Activated CD8-positive, alpha-beta T cell treated with anti-CD3 and anti-CD28 coated beads for 36 hours (primary cell): ENCODE measurements at regions of chr9 and their contacts with region 1.

Region 1: GRCh38 chr9:35553670-35554543 is 51.2 kb upstream of the TESK1 start:
- DNase-seq: peak; percentile 63
- ATAC-seq: peak; percentile 96
- H3K4me3 Mint-ChIP-seq: no peak overlapping the region
- H3K27ac Mint-ChIP-seq: no peak overlapping the region
- H3K4me1 Mint-ChIP-seq: no peaks in the 10 kb centered on the region
- H3K27me3 Mint-ChIP-seq: no peaks in the 10 kb centered on the region
- CTCF ChIP-seq: peak; percentile 80

Region 2: GRCh38 chr9:35116898-35117551 is 436.9 kb before region 1 on chr9:
- CTCF ChIA-PET with region 1: interaction called, 13 read pairs
- POLR2A ChIA-PET with region 1: no interaction called
- intact Hi-C with region 1: loop called (anchors 10 kb)
- DNase-seq: peak; percentile 91
- ATAC-seq: peak; percentile 51
- H3K4me3 Mint-ChIP-seq: peak overlapping the region; percentile 75
- H3K27ac Mint-ChIP-seq: peak overlapping the region; percentile 86
- H3K4me1 Mint-ChIP-seq: peaks cover 35% of the 10 kb centered on the region
- H3K27me3 Mint-ChIP-seq: no peaks in the 10 kb centered on the region
- CTCF ChIP-seq: peak; percentile 83

Region 3: DNA sequence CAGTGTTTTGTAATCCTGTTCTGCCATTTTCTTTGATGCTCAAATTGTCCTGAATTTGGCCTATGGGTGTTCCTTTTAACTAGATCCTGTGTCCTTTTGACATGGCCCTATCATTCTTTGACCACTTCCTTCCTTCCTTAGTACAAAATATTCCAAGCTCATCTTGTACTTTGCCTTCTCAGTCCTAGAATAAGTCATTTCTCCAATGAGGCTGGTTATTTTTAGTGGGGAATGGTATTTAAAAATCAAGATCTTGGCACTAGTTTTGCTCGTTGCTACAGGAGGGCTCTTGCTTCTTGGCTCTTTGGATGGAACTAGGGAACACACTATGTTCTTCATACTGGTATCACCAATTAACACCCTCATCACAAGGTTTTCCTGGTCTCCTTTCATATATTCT is 284.0 kb before region 1 on chr9:
- CTCF ChIA-PET with region 1: no interaction called
- POLR2A ChIA-PET with region 1: no interaction called
- intact Hi-C with region 1: no loop called
- DNase-seq: no peak
- ATAC-seq: no peak
- H3K4me3 Mint-ChIP-seq: no peak overlapping the region
- H3K27ac Mint-ChIP-seq: no peak overlapping the region
- H3K4me1 Mint-ChIP-seq: peaks cover 4% of the 10 kb centered on the region
- H3K27me3 Mint-ChIP-seq: peaks cover 16% of the 10 kb centered on the region
- CTCF ChIP-seq: no peak

Region 4: GRCh38 chr9:35481347-35481975 is 72.4 kb before region 1 on chr9:
- CTCF ChIA-PET with region 1: interaction called, 22 read pairs
- POLR2A ChIA-PET with region 1: interaction called, 3 read pairs
- intact Hi-C with region 1: no loop called
- DNase-seq: peak; percentile 58
- ATAC-seq: peak; percentile 65
- H3K4me3 Mint-ChIP-seq: no peak overlapping the region
- H3K27ac Mint-ChIP-seq: no peak overlapping the region
- H3K4me1 Mint-ChIP-seq: no peaks in the 10 kb centered on the region
- H3K27me3 Mint-ChIP-seq: peaks cover 5% of the 10 kb centered on the region
- CTCF ChIP-seq: peak; percentile 66

Region 5: DNA sequence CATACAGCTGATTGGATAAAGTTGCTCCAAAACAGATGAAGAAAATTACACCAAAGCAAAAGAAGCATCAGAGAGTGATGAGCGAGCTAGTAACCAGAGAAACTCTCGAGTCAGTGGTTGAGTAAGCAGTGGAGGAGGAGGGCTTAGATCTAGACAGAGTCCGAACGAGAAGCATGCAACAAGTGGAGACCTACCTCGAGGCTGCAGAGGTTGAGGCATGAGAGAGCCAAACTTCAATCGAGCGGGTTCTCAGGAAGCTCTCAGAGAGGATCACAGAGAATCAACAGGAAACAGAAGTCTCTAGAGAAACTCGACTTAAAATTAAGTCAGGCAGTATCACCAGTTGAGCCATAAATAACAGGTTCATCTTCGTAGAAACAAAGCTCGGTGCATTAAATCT is 57.9 kb before region 1 on chr9:
- CTCF ChIA-PET with region 1: interaction called, 12 read pairs
- POLR2A ChIA-PET with region 1: no interaction called
- intact Hi-C with region 1: no loop called
- DNase-seq: peak; percentile 21
- ATAC-seq: peak; percentile 73
- H3K4me3 Mint-ChIP-seq: no peak overlapping the region
- H3K27ac Mint-ChIP-seq: no peak overlapping the region
- H3K4me1 Mint-ChIP-seq: peaks cover 27% of the 10 kb centered on the region
- H3K27me3 Mint-ChIP-seq: peaks cover 2% of the 10 kb centered on the region
- CTCF ChIP-seq: no peak

Region 6: DNA sequence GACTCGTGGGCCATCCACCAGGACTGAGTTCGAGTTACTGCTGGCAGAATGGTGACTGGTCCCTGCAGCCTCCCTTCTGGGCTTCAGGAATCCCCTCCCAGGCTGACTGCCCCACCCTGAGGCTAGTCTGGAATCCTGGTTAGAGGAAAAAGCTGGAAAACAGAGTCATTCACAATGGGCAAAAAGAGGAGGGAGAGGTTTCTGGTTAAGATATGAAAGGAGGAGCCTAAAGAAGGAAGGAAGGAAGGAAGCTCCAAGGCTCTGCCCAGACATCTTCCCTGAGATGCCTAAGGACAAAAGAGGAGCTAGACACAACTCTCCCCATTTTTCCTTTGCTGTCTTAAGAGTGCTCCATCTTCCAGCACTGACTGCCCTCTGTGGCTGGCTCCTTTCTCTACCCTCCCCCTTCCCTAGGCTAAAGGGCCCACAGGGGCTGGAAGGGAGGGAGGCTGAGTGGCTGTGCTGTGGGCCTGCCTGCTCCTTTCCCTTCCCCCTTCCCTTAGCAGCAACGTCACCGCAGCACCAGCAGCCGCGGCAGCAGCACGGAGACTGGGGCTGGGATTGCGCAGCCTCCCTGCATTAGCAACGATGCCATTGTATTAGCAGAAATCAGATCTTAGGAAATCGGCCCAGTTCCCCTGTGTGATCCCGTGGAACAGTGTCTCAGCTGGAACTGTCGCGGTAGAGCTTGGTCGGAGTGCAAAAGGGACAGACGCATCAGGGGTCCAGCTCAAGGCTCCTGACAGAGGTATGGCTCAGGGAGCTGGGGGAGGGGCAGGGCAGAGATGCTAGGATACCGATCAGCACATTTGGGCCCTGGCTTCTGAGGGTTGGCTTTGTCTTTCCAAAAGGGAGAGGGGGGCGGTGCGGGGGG is 15.3 kb before region 1 on chr9:
- CTCF ChIA-PET with region 1: interaction called, 14 read pairs
- POLR2A ChIA-PET with region 1: no interaction called
- intact Hi-C with region 1: no loop called
- DNase-seq: no peak
- ATAC-seq: no peak
- H3K4me3 Mint-ChIP-seq: no peak overlapping the region
- H3K27ac Mint-ChIP-seq: no peak overlapping the region
- H3K4me1 Mint-ChIP-seq: no peaks in the 10 kb centered on the region
- H3K27me3 Mint-ChIP-seq: peaks cover 12% of the 10 kb centered on the region
- CTCF ChIP-seq: no peak

Region 7: GRCh38 chr9:35603987-35604577 is 50.2 kb after region 1 on chr9:
- CTCF ChIA-PET with region 1: interaction called, 10 read pairs
- POLR2A ChIA-PET with region 1: no interaction called
- intact Hi-C with region 1: no loop called
- DNase-seq: peak; percentile 100
- ATAC-seq: peak; percentile 95
- H3K4me3 Mint-ChIP-seq: peak overlapping the region; percentile 87
- H3K27ac Mint-ChIP-seq: peak overlapping the region; percentile 95
- H3K4me1 Mint-ChIP-seq: peaks cover 28% of the 10 kb centered on the region
- H3K27me3 Mint-ChIP-seq: no peaks in the 10 kb centered on the region
- CTCF ChIP-seq: peak; percentile 95